Gastrocnemius medialis (tissue), 4 donors: ENCODE measurements at regions of chr6 and their contacts with region 1.

Region 1: DNA sequence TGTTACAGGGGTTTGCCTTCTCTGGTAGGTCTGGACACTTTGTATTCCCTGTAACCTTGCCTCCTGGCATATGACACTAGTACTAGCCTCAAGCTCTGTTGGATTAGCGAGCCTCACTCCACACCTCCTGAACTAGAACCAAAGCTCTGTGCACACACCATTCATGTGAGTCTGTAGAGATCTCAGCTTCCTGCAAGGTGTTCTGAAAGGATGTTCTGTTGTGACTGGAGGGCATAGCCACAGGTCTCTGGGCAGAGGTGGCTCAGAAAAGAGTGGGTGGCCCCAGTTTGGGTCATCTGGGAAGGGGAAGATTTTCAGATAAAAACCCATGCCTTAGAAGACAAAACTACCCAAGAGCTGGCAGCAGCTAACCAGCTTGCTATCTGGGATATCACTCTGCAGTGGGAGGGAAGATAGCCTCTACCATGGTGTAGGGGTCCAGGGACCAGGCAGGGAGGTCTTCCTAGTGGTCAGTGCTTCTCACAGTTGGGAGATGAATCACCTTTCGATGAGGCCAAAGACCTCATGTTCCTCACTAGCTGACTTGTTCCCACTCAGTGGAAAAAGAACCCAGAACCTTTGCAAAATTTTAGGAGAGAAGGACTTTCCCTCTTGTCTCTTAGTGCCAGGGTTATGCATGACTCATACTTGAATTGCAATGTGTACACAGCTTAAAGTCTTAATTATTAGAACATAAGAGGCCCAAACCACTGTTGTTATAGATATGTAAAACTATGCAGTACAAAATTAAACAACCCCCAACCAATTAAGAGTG is 41.4 kb downstream of the HLA-F start:
- DNase-seq: no peak
- ATAC-seq: no peak
- H3K4me3 ChIP-seq: no peak overlapping the region
- H3K27ac ChIP-seq: no peak overlapping the region
- H3K4me1 ChIP-seq: no peaks in the 10 kb centered on the region
- H3K27me3 ChIP-seq: no peaks in the 10 kb centered on the region
- CTCF ChIP-seq: no peak
- POLR2A ChIP-seq: no peak

Region 2: GRCh38 chr6:29602564-29603361 is 161.8 kb before region 1 on chr6:
- in situ Hi-C with region 1: no loop called
- intact Hi-C with region 1: no loop called
- DNase-seq: no peak
- ATAC-seq: no peak
- H3K4me3 ChIP-seq: no peak overlapping the region
- H3K27ac ChIP-seq: no peak overlapping the region
- H3K4me1 ChIP-seq: no peaks in the 10 kb centered on the region
- H3K27me3 ChIP-seq: no peaks in the 10 kb centered on the region
- CTCF ChIP-seq: no peak
- POLR2A ChIP-seq: no peak

Region 3: GRCh38 chr6:29875257-29875656 is 110.6 kb after region 1 on chr6:
- in situ Hi-C with region 1: no loop called
- intact Hi-C with region 1: no loop called
- DNase-seq: no peak
- ATAC-seq: no peak
- H3K4me3 ChIP-seq: no peak overlapping the region
- H3K27ac ChIP-seq: no peak overlapping the region
- H3K4me1 ChIP-seq: no peaks in the 10 kb centered on the region
- H3K27me3 ChIP-seq: no peaks in the 10 kb centered on the region
- CTCF ChIP-seq: no peak
- POLR2A ChIP-seq: no peak

Region 4: DNA sequence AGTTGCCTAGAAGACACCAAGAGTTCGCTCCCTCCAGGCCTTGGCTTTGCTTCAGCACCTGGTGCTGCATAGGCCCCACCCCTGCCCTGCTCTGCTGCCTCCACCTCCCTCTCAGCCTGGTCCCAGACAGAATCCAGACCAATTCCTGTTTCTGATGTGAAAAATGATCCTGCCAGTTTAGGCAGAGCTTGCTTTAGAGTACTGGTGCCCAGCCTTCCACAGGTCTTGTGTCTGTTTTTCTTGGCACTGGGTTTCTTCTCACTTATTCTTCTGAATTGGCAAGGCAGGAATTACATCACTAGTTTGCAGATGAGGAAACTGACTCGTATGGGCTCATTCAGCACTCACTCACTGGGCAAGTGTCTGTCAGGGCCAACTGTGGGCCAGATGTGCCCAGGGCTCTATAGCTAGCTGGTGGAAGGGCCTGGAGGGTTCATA is 230.8 kb after region 1 on chr6:
- in situ Hi-C with region 1: no loop called
- intact Hi-C with region 1: loop called (anchors 5 kb)
- DNase-seq: no peak
- ATAC-seq: no peak
- H3K4me3 ChIP-seq: no peak overlapping the region
- H3K27ac ChIP-seq: no peak overlapping the region
- H3K4me1 ChIP-seq: no peaks in the 10 kb centered on the region
- H3K27me3 ChIP-seq: no peaks in the 10 kb centered on the region
- CTCF ChIP-seq: no peak
- POLR2A ChIP-seq: no peak